Natural killer cell (primary cell): ENCODE measurements at regions of chr11 and their contacts with region 1.

Region 1: DNA sequence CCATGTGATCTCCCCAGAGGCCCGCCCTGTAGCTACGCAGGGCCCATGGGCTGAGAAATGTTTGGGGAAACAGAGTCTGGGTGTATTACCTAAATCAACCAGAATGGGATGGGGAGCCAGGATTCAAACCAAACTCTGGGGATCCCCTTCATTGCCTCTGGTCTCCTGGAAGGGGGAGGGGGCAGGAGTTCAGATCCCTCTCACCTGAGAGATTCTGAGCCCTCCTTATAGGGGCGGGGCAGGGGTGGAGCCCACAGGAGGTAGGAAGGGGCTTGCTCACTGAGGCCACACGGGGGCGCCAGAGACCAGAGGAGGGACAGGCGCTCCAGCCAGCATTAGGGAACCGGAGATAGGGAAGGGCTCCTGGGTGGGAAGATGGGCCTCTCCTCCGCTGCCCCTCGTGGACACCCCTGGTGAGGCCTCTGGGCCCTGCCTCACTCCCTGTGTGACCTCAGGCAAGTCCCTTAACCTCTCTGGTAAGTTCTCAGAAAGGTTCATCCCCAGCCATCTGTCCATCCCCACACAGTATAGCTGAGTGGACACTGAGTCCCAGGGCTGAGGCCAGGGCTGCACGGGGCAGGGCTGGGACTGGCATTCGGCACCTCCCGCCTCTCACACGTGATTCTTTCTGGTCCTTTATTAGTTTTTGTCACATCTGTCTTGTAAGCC is 2.7 kb upstream of the CDC42BPG start:
- DNase-seq: peak; percentile 91 to 95
- ATAC-seq: peak; percentile 57 to 81 (median 65)
- H3K4me3 ChIP-seq: no peak overlapping the region
- H3K4me3 Mint-ChIP-seq: no peak overlapping the region
- H3K27ac ChIP-seq: peak overlapping the region; percentile 40
- H3K27ac Mint-ChIP-seq: peak overlapping the region; percentile 29 to 81
- H3K4me1 ChIP-seq: peaks cover 70% of the 10 kb centered on the region
- H3K4me1 Mint-ChIP-seq: peaks cover 45 to 60% of the 10 kb centered on the region in 2 donors
- H3K27me3 ChIP-seq: no peaks in the 10 kb centered on the region
- H3K27me3 Mint-ChIP-seq: no peaks in the 10 kb centered on the region
- CTCF ChIP-seq: peak; percentile 96

Region 2: GRCh38 chr11:64284048-64284961 is 562.8 kb before region 1 on chr11 and contains the start of gene BAD:
- intact Hi-C with region 1: no loop called
- DNase-seq: peak; percentile 84 to 94
- ATAC-seq: peak; percentile 76 to 90 (median 78)
- H3K4me3 ChIP-seq: peak within 1 kb of the TSS; percentile 87
- H3K4me3 Mint-ChIP-seq: peak within 1 kb of the TSS; percentile 93
- H3K27ac ChIP-seq: peak within 1 kb of the TSS; percentile 99
- H3K27ac Mint-ChIP-seq: peak within 1 kb of the TSS; percentile 94 to 96
- H3K4me1 ChIP-seq: peaks cover 22% of the 10 kb centered on the region
- H3K4me1 Mint-ChIP-seq: peaks cover 12 to 16% of the 10 kb centered on the region in 2 donors
- H3K27me3 ChIP-seq: no peaks in the 10 kb centered on the region
- H3K27me3 Mint-ChIP-seq: no peaks in the 10 kb centered on the region
- CTCF ChIP-seq: no peak
- total RNA-seq, gene BAD: 30.6 to 35.8 (median 31.6) TPM

Region 3: DNA sequence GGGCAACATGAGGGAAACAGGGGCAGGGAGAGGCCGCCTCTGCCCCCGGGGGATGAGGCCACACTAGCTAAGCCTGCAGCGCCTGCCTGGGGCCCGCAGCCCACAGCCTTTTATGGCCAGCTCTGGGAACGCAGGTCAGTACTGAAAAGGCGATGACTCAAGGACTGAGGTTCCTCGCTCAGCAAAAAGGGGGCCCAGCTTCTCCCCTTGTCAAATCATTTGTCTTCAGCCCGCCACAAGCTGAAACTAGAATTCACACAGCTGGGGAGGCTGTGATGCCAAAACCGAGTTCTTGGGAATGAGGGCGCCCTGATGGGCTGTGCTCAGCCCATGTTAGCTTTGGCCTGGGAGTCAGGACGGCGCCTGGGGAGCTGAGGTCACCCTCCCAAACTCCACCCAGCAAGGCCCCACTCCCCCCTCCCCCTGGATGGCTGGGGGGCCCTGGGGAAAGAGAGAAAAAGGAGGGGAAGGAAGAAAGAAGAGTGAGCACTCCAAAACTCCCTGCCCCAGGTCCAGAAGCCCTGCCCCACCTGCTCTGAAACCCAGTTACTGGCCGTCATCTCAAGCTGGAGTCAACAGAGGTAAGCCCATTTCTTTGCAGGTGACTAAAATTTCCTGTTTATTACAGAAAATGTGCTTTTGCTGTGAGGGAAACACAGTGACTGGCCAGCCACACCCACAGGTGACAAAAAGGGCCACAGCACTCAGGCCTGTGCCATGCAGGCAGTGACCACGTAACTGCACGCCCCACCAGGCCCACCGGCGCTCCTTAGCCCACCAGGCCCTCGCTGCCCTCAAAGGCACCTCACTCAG is 17.5 kb after region 1 on chr11:
- intact Hi-C with region 1: loop called (anchors 1 kb)
- DNase-seq: peak in 1 of 2 donors; percentile 50
- ATAC-seq: peak; percentile 25 to 50 (median 25)
- H3K4me3 ChIP-seq: peak overlapping the region; percentile 10
- H3K4me3 Mint-ChIP-seq: peak overlapping the region; percentile 81
- H3K27ac ChIP-seq: peak overlapping the region; percentile 91
- H3K27ac Mint-ChIP-seq: peak overlapping the region; percentile 95 to 96
- H3K4me1 ChIP-seq: peaks cover 99% of the 10 kb centered on the region
- H3K4me1 Mint-ChIP-seq: peaks cover 65 to 85% of the 10 kb centered on the region in 2 donors
- H3K27me3 ChIP-seq: no peaks in the 10 kb centered on the region
- H3K27me3 Mint-ChIP-seq: no peaks in the 10 kb centered on the region
- CTCF ChIP-seq: no peak

Region 4: GRCh38 chr11:64894070-64894796 is 47.1 kb after region 1 on chr11:
- intact Hi-C with region 1: loop called (anchors 1 kb)
- DNase-seq: peak; percentile 93 to 95
- ATAC-seq: peak; percentile 75 to 87 (median 78)
- H3K4me3 ChIP-seq: no peak overlapping the region
- H3K4me3 Mint-ChIP-seq: no peak overlapping the region
- H3K27ac ChIP-seq: no peak overlapping the region
- H3K27ac Mint-ChIP-seq: peak overlapping the region in 1 of 2 donors; percentile 58
- H3K4me1 ChIP-seq: peaks cover 17% of the 10 kb centered on the region
- H3K4me1 Mint-ChIP-seq: peaks cover 0 to 8% of the 10 kb centered on the region in 2 donors
- H3K27me3 ChIP-seq: no peaks in the 10 kb centered on the region
- H3K27me3 Mint-ChIP-seq: no peaks in the 10 kb centered on the region
- CTCF ChIP-seq: peak; percentile 79

Region 5: GRCh38 chr11:65013692-65014145 is 166.6 kb after region 1 on chr11:
- intact Hi-C with region 1: loop called (anchors 5 kb)
- DNase-seq: peak in 1 of 2 donors; percentile 94
- ATAC-seq: peak; percentile 85 to 94 (median 87)
- H3K4me3 ChIP-seq: peak overlapping the region; percentile 93
- H3K4me3 Mint-ChIP-seq: peak overlapping the region; percentile 95
- H3K27ac ChIP-seq: peak overlapping the region; percentile 100
- H3K27ac Mint-ChIP-seq: peak overlapping the region; percentile 95 to 96
- H3K4me1 ChIP-seq: peaks cover 26% of the 10 kb centered on the region
- H3K4me1 Mint-ChIP-seq: peaks cover 21 to 29% of the 10 kb centered on the region in 2 donors
- H3K27me3 ChIP-seq: no peaks in the 10 kb centered on the region
- H3K27me3 Mint-ChIP-seq: no peaks in the 10 kb centered on the region
- CTCF ChIP-seq: no peak

Region 6: GRCh38 chr11:65111744-65112414 is 264.7 kb after region 1 on chr11 and contains the start of gene TM7SF2:
- intact Hi-C with region 1: loop called (anchors 5 kb)
- DNase-seq: peak; percentile 94 to 96
- ATAC-seq: peak; percentile 76 to 87 (median 82)
- H3K4me3 ChIP-seq: peak within 1 kb of the TSS; percentile 62
- H3K4me3 Mint-ChIP-seq: peak within 1 kb of the TSS; percentile 96
- H3K27ac ChIP-seq: peak within 1 kb of the TSS; percentile 58
- H3K27ac Mint-ChIP-seq: peak within 1 kb of the TSS; percentile 91 to 97
- H3K4me1 ChIP-seq: peaks cover 59% of the 10 kb centered on the region
- H3K4me1 Mint-ChIP-seq: peaks cover 35% of the 10 kb centered on the region in 2 donors
- H3K27me3 ChIP-seq: no peaks in the 10 kb centered on the region
- H3K27me3 Mint-ChIP-seq: no peaks in the 10 kb centered on the region
- CTCF ChIP-seq: no peak
- total RNA-seq, gene TM7SF2: 17.0 to 23.2 (median 18.6) TPM

Region 7: GRCh38 chr11:65329944-65330403 is 482.8 kb after region 1 on chr11:
- intact Hi-C with region 1: loop called (anchors 10 kb)
- DNase-seq: peak; percentile 66 to 93
- ATAC-seq: peak in 2 of 3 donors; percentile 24 to 35
- H3K4me3 ChIP-seq: no peak overlapping the region
- H3K4me3 Mint-ChIP-seq: no peak overlapping the region
- H3K27ac ChIP-seq: no peak overlapping the region
- H3K27ac Mint-ChIP-seq: peak overlapping the region; percentile 38 to 69
- H3K4me1 ChIP-seq: peaks cover 8% of the 10 kb centered on the region
- H3K4me1 Mint-ChIP-seq: peaks cover 18 to 19% of the 10 kb centered on the region in 2 donors
- H3K27me3 ChIP-seq: no peaks in the 10 kb centered on the region
- H3K27me3 Mint-ChIP-seq: no peaks in the 10 kb centered on the region
- CTCF ChIP-seq: peak; percentile 84